Naive thymus-derived CD4-positive, alpha-beta T cell (primary cell): ENCODE measurements at regions of chrX and their contacts with region 1.

Region 1: DNA sequence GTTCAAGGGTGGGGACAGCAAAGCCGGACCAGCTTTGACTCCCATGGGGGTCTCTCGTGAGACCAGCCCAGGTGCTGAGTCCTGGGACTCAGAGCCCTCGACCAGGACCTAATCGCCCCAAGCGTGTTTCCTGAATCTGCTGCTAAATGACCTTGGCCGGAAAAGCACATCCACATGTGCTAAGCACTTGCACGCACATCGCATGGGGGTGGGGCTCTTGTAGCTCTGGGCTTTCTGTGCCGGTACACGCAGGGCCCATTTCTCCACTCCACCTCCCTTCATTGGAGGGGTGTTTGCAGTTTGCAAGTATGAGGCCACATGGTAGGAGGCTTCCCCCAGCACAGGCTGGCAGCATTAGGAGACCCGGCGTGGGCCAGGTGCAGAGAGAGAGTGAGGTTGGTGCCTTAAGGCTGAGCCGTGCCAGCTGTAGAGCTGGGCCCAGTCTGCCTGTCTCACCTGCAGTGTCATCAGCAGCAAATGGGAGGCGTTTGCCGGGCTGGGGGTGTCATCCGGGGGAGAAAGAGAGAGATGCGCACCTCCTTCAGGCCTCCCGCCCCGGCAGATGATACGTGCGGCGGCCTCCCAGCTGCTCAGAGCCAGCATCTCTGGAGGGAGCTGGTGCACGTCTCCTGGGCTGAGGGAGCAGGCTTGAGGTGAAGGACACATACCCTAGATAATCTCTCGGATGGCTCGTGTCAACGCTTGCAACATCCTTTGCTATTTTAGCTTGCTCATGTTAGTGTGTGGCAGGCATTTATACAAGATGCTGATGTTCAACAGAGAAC is 45.2 kb upstream of the CLCN4 start:
- DNase-seq: peak; percentile 12 to 81 (median 73)
- ATAC-seq: peak; percentile 84
- H3K4me3 ChIP-seq: peak overlapping the region; percentile 56
- H3K4me3 Mint-ChIP-seq: peak overlapping the region; percentile 65 to 90 (median 85)
- H3K27ac ChIP-seq: peak overlapping the region; percentile 81
- H3K27ac Mint-ChIP-seq: peak overlapping the region; percentile 96 to 100 (median 98)
- H3K4me1 ChIP-seq: peaks cover 61% of the 10 kb centered on the region in 2 donors
- H3K4me1 Mint-ChIP-seq: peaks cover 14 to 64% (median 62%) of the 10 kb centered on the region in 7 donors
- H3K27me3 ChIP-seq: no peaks in the 10 kb centered on the region
- H3K27me3 Mint-ChIP-seq: no peaks in the 10 kb centered on the region

Region 2: DNA sequence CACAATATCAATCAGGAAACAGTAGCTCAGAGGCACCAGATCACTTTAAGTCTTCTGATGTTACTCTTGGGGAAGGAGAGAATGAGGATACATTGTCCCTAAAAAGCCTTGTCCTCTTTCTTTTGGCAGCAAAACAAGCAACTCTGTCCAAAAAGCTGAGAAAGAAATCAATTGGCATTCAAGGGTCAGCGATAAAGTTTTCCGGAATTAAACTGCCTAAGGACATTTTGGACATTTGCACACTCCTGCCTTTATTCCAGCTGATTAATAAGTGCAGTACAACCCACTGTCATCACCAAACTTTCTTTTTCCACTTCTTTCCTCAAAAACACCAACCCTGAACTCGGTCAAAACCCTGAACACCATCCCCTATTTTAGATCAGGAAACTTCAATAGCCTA is 1224.6 kb before region 1 on chrX:
- CTCF ChIA-PET with region 1: no interaction called
- POLR2A ChIA-PET with region 1: no interaction called
- intact Hi-C with region 1: no loop called
- DNase-seq: no peak
- ATAC-seq: no peak
- H3K4me3 ChIP-seq: no peak overlapping the region
- H3K4me3 Mint-ChIP-seq: no peak overlapping the region
- H3K27ac ChIP-seq: no peak overlapping the region
- H3K27ac Mint-ChIP-seq: peak overlapping the region in 1 of 9 donors; percentile 19
- H3K4me1 ChIP-seq: no peaks in the 10 kb centered on the region
- H3K4me1 Mint-ChIP-seq: peaks cover 0 to 5% (median 0%) of the 10 kb centered on the region in 7 donors
- H3K27me3 ChIP-seq: no peaks in the 10 kb centered on the region
- H3K27me3 Mint-ChIP-seq: peaks cover 4 to 9% (median 6%) of the 10 kb centered on the region in 5 donors

Region 3: DNA sequence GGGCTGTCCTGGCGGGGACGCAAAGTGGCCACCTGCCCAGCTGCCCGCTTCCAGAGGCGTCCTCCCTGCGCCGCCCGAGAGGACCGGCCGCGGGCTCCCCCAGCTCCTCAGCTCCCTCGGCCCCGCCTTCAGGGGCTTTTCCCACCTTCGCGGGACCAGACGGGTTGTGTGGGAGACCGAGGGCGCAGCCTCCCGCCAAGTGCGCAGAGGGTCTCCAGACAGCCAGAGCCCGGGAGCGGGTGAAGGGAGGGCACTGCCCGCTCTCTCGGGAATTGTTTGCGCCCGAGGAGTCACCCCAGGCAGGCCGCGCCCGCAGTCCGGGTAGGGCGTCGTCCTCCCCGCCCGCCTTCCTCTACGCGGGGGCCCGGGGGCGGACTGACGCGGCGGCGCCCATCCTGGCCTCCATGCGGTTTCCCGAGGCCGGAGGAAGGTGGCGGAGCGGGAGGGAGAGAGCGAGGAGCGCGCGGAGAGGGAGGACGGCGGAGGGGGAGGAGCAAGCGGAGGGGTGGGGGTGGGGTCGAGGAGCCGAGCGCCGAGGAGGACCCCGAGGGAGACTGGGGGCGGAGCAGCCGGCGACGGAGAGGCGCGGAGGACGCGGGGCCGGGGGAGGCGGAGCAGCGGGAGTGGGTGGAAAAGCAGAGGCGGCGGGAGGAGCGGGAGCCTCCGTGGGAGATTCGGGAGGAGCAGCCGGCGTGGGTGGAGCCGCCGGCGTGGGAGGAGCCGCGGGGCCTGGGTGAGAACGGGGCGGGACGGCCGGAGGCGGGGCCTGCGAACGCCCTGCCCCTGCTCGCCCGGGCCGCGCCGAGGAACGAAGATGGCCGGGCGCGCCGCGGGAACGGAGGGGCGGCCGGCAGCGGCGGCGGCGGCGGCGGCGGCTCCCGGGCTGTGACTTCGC is 96.8 kb before region 1 on chrX:
- CTCF ChIA-PET with region 1: interaction called, 6 read pairs
- POLR2A ChIA-PET with region 1: interaction called, 8 read pairs
- intact Hi-C with region 1: loop called in 1 of 2 experiments (anchors 1 kb)
- DNase-seq: peak; percentile 62 to 84 (median 78)
- ATAC-seq: peak; percentile 97
- H3K4me3 ChIP-seq: peak overlapping the region; percentile 37
- H3K4me3 Mint-ChIP-seq: peak overlapping the region; percentile 50 to 89 (median 64)
- H3K27ac ChIP-seq: peak overlapping the region; percentile 64
- H3K27ac Mint-ChIP-seq: peak overlapping the region in 4 of 9 donors; percentile 45 to 75 (median 58)
- H3K4me1 ChIP-seq: peaks cover 7 to 13% of the 10 kb centered on the region in 2 donors
- H3K4me1 Mint-ChIP-seq: peaks cover 17 to 51% (median 43%) of the 10 kb centered on the region in 7 donors
- H3K27me3 ChIP-seq: no peaks in the 10 kb centered on the region
- H3K27me3 Mint-ChIP-seq: peaks cover 0 to 4% (median 0%) of the 10 kb centered on the region in 5 donors

Region 4: GRCh38 chrX:10077425-10078188 is 33.9 kb before region 1 on chrX:
- CTCF ChIA-PET with region 1: interaction called, 23 read pairs
- POLR2A ChIA-PET with region 1: interaction called, 39 read pairs
- intact Hi-C with region 1: loop called (anchors 1 to 2 kb)
- DNase-seq: peak in 4 of 9 donors; percentile 23 to 47 (median 28)
- ATAC-seq: no peak
- H3K4me3 ChIP-seq: no peak overlapping the region
- H3K4me3 Mint-ChIP-seq: no peak overlapping the region
- H3K27ac ChIP-seq: no peak overlapping the region
- H3K27ac Mint-ChIP-seq: peak overlapping the region in 3 of 9 donors; percentile 14 to 80 (median 66)
- H3K4me1 ChIP-seq: peaks cover 4 to 5% of the 10 kb centered on the region in 2 donors
- H3K4me1 Mint-ChIP-seq: peaks cover 0 to 18% (median 11%) of the 10 kb centered on the region in 7 donors
- H3K27me3 ChIP-seq: no peaks in the 10 kb centered on the region
- H3K27me3 Mint-ChIP-seq: no peaks in the 10 kb centered on the region

Region 5: GRCh38 chrX:10083809-10084208 is 27.7 kb before region 1 on chrX:
- CTCF ChIA-PET with region 1: interaction called, 8 read pairs
- POLR2A ChIA-PET with region 1: interaction called, 39 read pairs
- intact Hi-C with region 1: loop called (anchors 1 to 2 kb)
- DNase-seq: no peak
- ATAC-seq: no peak
- H3K4me3 ChIP-seq: no peak overlapping the region
- H3K4me3 Mint-ChIP-seq: peak overlapping the region in 5 of 10 donors; percentile 1 to 54 (median 25)
- H3K27ac ChIP-seq: no peak overlapping the region
- H3K27ac Mint-ChIP-seq: peak overlapping the region in 5 of 9 donors; percentile 20 to 94 (median 58)
- H3K4me1 ChIP-seq: peaks cover 26 to 28% of the 10 kb centered on the region in 2 donors
- H3K4me1 Mint-ChIP-seq: peaks cover 8 to 45% (median 41%) of the 10 kb centered on the region in 7 donors
- H3K27me3 ChIP-seq: no peaks in the 10 kb centered on the region
- H3K27me3 Mint-ChIP-seq: no peaks in the 10 kb centered on the region

Region 6: DNA sequence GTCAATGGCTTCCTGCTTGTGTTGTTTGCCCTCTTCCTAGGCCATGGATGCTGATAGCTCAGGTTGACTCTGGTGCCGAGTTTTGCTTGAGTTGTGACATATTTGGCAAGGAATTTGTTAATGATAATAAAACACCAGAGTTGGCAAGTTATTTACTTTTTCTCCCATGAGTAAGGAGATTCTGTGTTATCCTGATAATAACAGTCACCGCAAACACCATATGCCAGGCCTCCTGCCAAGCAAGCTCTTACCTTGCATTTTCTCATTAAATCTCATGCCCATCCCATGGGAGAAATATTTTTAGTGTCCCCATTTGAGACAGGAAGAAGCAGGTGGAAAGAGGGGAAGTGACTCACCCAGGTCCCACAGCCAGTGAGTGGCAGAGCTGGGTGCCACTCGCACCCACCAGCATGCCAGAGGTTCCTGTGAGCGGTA is 22.2 kb before region 1 on chrX:
- CTCF ChIA-PET with region 1: interaction called, 3 read pairs
- POLR2A ChIA-PET with region 1: interaction called, 39 read pairs
- intact Hi-C with region 1: loop called in 1 of 2 experiments (anchors 1 kb)
- DNase-seq: no peak
- ATAC-seq: no peak
- H3K4me3 ChIP-seq: no peak overlapping the region
- H3K4me3 Mint-ChIP-seq: no peak overlapping the region
- H3K27ac ChIP-seq: no peak overlapping the region
- H3K27ac Mint-ChIP-seq: no peak overlapping the region
- H3K4me1 ChIP-seq: peaks cover 10 to 12% of the 10 kb centered on the region in 2 donors
- H3K4me1 Mint-ChIP-seq: peaks cover 3 to 27% (median 22%) of the 10 kb centered on the region in 7 donors
- H3K27me3 ChIP-seq: no peaks in the 10 kb centered on the region
- H3K27me3 Mint-ChIP-seq: no peaks in the 10 kb centered on the region

Region 7: DNA sequence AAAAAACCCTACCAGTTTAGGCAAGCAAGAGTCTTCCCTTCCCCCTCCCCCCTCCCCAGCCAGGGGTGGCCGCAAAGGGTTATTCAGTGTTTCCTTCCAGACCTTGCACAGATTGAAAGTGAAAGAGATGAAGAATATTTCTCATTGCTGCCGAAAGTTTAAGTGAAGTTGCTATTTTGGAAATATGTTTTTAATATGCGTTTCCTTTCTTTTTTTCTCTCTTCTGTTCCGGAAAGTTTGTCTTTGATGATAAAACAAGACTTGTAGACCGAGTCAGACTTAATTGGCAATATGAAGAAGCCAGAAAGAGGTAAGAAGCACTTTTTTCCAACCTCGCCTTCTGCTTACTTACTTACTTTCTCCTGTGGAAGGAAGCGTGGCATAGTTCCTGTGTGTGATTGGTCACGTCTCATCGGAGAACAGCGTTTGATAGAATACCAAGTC is 13.3 kb before region 1 on chrX:
- CTCF ChIA-PET with region 1: interaction called, 18 read pairs
- POLR2A ChIA-PET with region 1: interaction called, 34 read pairs
- intact Hi-C with region 1: loop called (anchors 1 kb)
- DNase-seq: peak in 8 of 9 donors; percentile 30 to 78 (median 64)
- ATAC-seq: peak; percentile 87
- H3K4me3 ChIP-seq: peak overlapping the region; percentile 72
- H3K4me3 Mint-ChIP-seq: peak overlapping the region; percentile 83 to 94 (median 88)
- H3K27ac ChIP-seq: peak overlapping the region; percentile 73
- H3K27ac Mint-ChIP-seq: peak overlapping the region; percentile 86 to 98 (median 92)
- H3K4me1 ChIP-seq: peaks cover 5 to 9% of the 10 kb centered on the region in 2 donors
- H3K4me1 Mint-ChIP-seq: peaks cover 13 to 58% (median 51%) of the 10 kb centered on the region in 7 donors
- H3K27me3 ChIP-seq: no peaks in the 10 kb centered on the region
- H3K27me3 Mint-ChIP-seq: no peaks in the 10 kb centered on the region